Activated CD4-positive, alpha-beta memory T cell treated with anti-CD3 and anti-CD28 coated beads for 36 hours (primary cell): ENCODE measurements at regions of chr12 and their contacts with region 1.

Region 1: GRCh38 chr12:13941258-13942249 is 39.8 kb downstream of the GRIN2B start:
- DNase-seq: peak; percentile 33
- H3K4me3 Mint-ChIP-seq: no peak overlapping the region
- H3K27ac Mint-ChIP-seq: no peak overlapping the region
- H3K4me1 Mint-ChIP-seq: no peaks in the 10 kb centered on the region
- H3K27me3 Mint-ChIP-seq: peaks cover 12% of the 10 kb centered on the region

Region 2: DNA sequence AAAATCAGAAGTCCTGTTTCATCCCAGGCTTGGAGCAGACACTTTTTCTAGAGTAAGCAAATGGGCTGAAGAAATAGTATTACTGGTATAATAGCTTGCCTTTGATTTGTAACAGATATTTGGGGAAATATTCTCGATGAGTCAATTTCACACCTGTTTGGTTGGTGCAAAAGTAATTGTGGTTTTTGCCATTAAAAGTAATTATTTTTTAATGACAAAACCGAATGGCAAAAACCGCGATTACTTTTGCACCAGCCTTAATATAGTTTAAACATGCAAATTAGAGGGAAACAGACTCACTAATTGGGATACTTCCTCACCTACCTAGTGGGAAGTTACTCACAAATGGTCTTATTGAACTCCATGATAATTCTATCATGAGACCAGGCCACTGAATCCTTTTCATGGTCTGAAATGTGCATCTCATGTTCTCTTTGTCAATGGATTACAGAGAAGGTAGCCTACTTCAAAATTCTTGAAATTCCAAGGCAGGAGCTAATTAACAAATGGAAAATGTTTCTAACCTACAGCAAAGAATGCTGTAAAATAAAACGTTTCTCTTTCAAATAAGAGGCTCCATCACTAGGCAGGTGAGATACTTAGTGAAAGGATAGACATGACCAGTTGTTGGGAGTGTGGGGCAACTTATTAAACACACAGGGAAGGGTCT is 353.7 kb before region 1 on chr12:
- CTCF ChIA-PET with region 1: no interaction called
- POLR2A ChIA-PET with region 1: no interaction called
- intact Hi-C with region 1: no loop called
- DNase-seq: no peak
- H3K4me3 Mint-ChIP-seq: no peak overlapping the region
- H3K27ac Mint-ChIP-seq: no peak overlapping the region
- H3K4me1 Mint-ChIP-seq: no peaks in the 10 kb centered on the region
- H3K27me3 Mint-ChIP-seq: no peaks in the 10 kb centered on the region

Region 3: DNA sequence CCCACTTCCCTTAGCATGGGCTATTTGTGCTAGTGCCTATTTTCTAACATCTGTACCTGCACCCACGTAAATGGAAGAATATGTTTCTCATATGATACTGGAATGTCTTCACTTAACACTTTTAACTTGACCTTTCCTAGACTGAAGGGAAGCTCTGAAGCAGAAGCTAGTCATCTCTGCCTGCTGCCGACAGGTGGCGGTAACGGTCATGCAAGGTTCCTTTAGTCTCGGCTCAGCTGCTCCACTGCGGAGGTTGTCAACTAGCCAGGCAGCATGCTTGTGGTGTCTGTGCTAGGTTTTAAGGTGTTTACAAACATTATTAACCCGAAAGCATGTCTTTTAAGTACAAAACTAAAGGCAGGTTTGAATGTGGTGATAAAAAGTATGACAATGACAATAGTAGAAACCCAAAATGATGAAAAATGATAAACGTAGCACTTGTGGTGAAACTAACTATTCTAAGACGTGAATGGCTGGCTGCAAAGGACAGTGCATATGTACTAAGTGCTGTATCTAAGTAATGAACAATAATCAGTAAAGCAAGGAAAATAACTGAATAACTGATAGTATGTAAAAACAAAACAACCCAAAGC is 77.4 kb before region 1 on chr12:
- CTCF ChIA-PET with region 1: interaction called, 5 read pairs
- POLR2A ChIA-PET with region 1: no interaction called
- intact Hi-C with region 1: loop called (anchors 5 kb)
- DNase-seq: peak; percentile 67
- H3K4me3 Mint-ChIP-seq: no peak overlapping the region
- H3K27ac Mint-ChIP-seq: no peak overlapping the region
- H3K4me1 Mint-ChIP-seq: no peaks in the 10 kb centered on the region
- H3K27me3 Mint-ChIP-seq: peaks cover 8% of the 10 kb centered on the region

Region 4: DNA sequence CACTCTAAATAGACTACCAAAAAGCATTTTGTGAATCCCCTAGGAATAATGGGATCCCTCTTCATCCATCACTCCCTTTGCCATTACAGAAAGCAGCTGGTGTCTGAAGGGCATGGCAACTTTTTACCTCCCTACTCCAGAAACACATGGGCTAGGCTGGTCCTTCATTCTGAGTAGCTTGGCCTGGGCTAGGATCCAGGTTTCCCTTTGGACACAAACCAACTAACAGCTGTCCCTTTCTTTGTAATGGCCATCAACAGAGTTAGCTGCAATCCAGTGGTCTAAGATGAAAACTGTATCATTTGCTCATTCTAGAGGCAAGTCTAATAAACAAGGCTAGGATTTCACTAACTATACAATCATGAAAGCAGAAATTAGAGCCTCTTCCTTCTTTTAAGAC is 32.4 kb after region 1 on chr12:
- CTCF ChIA-PET with region 1: no interaction called
- POLR2A ChIA-PET with region 1: no interaction called
- intact Hi-C with region 1: no loop called
- DNase-seq: no peak
- H3K4me3 Mint-ChIP-seq: no peak overlapping the region
- H3K27ac Mint-ChIP-seq: no peak overlapping the region
- H3K4me1 Mint-ChIP-seq: no peaks in the 10 kb centered on the region
- H3K27me3 Mint-ChIP-seq: peaks cover 28% of the 10 kb centered on the region